Activated CD4-positive, alpha-beta memory T cell treated with anti-CD3 and anti-CD28 coated beads, Interleukin-2, amount 10 ng/mL, durations not matched to agents 7 days and 5 days (primary cell): ENCODE measurements at regions of chr19 and their contacts with region 1.

Region 1: GRCh38 chr19:5719961-5720790 is at the starts of genes CATSPERD and LONP1:
- DNase-seq: peak; percentile 99
- H3K4me3 Mint-ChIP-seq: peak within 1 kb of the TSS; percentile 86
- H3K27ac Mint-ChIP-seq: peak within 1 kb of the TSS; percentile 96
- H3K4me1 Mint-ChIP-seq: peaks cover 34% of the 10 kb centered on the region
- H3K27me3 Mint-ChIP-seq: peaks cover 4% of the 10 kb centered on the region
- total RNA-seq, gene CATSPERD: not detected
- total RNA-seq, gene LONP1: 98.7 to 106 TPM

Region 2: DNA sequence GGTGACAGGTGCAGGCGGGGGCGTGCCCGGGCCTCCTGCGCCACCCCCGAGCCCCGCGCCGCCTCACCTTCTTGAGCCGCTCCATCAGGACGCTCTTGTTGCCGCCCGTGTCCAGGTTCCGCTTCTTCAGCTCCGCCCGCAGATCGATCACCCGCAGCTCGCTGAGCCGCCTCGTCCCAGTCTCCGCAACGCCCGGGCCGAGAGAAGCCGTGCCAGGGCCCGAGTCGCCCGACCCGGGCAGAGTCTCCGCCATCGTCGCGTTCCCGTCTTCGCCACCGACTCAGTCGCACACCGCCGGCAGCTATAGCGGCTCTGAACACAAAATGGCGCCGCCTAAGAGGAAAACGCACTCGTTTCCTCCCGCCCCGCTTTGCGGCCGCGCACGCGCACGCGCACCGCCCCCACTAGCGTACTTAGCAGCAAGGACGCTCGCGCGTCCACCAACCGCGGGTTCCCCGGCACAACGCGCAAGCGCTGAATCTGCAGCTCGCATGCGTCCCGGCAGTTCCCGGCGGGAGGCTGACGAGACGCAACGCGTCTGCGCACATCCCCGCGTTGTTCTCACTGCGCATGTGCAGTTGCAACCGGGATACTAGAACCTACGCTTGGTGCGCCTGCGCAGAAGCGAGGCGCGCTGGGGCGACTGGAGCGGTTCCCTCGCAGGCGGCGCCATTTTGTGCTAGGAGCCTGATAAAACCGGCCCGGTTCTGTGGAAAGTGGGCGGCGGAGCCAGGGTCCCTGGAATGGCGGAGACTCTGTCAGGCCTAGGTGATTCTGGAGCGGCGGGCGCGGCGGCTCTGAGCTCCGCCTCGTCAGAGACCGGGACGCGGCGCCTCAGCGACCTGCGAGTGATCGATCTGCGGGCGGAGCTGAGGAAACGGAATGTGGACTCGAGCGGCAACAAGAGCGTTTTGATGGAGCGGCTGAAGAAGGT is 97.4 kb before region 1 on chr19 and contains the starts of genes SAFB and SAFB2:
- CTCF ChIA-PET with region 1: interaction called, 11 read pairs
- POLR2A ChIA-PET with region 1: interaction called, 32 read pairs
- DNase-seq: peak; percentile 100
- H3K4me3 Mint-ChIP-seq: peak within 1 kb of the TSS; percentile 99
- H3K27ac Mint-ChIP-seq: peak within 1 kb of the TSS; percentile 96
- H3K4me1 Mint-ChIP-seq: peaks cover 65% of the 10 kb centered on the region
- H3K27me3 Mint-ChIP-seq: no peaks in the 10 kb centered on the region
- total RNA-seq, gene SAFB: 124 to 126 TPM
- total RNA-seq, gene SAFB2: 90.5 to 90.7 TPM

Region 3: DNA sequence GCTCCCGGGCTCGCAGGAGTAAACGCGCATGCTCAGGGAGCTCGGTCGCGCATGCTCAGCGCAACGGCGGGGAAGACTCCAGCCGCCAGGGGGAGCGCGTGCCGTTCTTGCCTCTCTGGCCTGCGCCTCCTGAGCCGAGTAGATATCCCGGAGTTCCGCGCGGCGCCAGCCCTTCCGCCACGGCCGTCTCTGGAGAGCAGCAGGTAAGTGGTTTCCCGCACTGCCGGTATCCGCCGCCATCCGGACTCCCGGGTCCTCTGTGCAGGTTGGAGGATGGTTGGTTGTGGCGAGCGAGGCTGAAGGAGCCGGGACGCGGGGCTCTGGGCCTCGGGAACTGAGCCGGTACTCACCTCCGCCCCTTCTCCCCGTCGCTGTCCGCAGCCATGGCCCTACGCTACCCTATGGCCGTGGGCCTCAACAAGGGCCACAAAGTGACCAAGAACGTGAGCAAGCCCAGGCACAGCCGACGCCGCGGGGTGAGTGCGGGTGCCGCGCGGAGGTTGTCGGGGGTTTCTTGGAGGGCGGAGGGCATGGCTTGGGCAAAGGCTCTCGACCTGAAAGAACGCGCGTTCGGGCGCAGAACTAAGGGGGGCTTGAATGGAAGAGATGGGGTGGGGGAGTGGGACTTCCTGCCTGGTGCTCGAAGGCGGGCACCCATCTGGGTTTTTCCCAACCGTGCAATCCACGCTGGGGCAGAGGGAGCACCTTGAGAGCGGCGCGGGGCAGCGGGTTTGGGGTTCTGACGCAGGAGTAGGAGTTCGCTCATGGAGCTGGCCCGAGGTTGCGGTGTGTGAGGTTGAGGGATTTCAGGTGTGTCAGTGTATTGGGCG is 29.8 kb before region 1 on chr19 and contains the start of gene RPL36:
- CTCF ChIA-PET with region 1: interaction called, 76 read pairs
- POLR2A ChIA-PET with region 1: interaction called, 109 read pairs
- DNase-seq: peak; percentile 99
- H3K4me3 Mint-ChIP-seq: peak within 1 kb of the TSS; percentile 90
- H3K27ac Mint-ChIP-seq: peak within 1 kb of the TSS; percentile 91
- H3K4me1 Mint-ChIP-seq: peaks cover 41% of the 10 kb centered on the region
- H3K27me3 Mint-ChIP-seq: no peaks in the 10 kb centered on the region
- total RNA-seq, gene RPL36: 1,036 to 1,058 TPM

Region 4: GRCh38 chr19:5707576-5708575 is 12.3 kb before region 1 on chr19:
- CTCF ChIA-PET with region 1: no interaction called
- POLR2A ChIA-PET with region 1: interaction called, 24 read pairs
- DNase-seq: no peak
- H3K4me3 Mint-ChIP-seq: no peak overlapping the region
- H3K27ac Mint-ChIP-seq: no peak overlapping the region
- H3K4me1 Mint-ChIP-seq: no peaks in the 10 kb centered on the region
- H3K27me3 Mint-ChIP-seq: no peaks in the 10 kb centered on the region

Region 5: DNA sequence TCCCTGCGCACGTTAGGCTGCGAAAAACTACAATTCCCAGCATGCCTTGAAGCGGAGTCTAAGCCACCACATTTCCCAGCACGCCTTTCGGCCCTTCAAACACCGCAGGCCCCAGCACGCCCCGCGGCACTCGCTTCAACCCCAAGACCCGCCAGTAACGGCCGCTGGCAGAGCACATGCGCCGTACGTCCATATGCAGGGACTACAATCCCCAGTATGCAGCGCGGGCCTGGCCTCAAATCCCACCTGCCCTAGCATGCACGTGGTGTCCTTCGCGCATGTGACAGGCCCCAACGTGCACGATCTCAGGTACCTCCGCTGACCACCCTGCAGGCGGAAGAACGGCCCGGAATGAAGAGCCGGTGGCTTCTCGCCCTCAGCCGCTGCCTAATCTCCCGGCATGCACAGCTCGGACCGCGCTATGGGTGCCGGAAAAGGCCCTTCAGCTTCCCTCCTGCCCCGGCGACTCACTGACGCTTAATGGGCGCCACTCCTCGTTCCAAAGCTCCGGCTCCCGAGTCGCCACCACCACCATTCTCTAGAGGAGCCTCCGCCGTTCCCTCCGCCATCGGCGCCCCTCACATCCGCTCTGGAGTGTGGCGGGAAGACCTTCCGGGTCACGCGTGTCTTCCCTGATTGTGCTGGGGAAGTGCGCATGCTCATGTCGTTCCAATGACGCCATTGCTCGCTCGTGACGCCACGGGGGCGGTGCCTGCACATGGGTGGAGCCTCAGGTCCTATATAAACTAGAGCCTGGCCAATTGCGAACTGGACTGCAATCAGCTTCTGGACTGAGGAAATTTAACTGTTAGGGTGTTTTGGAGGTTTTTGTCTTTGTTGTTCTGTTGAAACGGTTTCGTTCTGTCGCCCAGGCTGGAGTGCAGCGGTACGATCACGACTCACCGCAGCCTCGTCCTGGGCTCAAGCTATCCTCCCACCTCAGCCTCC is 70.7 kb after region 1 on chr19 and contains the start of gene DUS3L:
- CTCF ChIA-PET with region 1: interaction called, 5 read pairs
- POLR2A ChIA-PET with region 1: interaction called, 14 read pairs
- DNase-seq: peak; percentile 97
- H3K4me3 Mint-ChIP-seq: peak within 1 kb of the TSS; percentile 99
- H3K27ac Mint-ChIP-seq: peak within 1 kb of the TSS; percentile 100
- H3K4me1 Mint-ChIP-seq: peaks cover 16% of the 10 kb centered on the region
- H3K27me3 Mint-ChIP-seq: no peaks in the 10 kb centered on the region
- total RNA-seq, gene DUS3L: 38.3 to 42.1 TPM